ENCODE measurements at regions of chr2 and their contacts with region 1.

Region 1: DNA sequence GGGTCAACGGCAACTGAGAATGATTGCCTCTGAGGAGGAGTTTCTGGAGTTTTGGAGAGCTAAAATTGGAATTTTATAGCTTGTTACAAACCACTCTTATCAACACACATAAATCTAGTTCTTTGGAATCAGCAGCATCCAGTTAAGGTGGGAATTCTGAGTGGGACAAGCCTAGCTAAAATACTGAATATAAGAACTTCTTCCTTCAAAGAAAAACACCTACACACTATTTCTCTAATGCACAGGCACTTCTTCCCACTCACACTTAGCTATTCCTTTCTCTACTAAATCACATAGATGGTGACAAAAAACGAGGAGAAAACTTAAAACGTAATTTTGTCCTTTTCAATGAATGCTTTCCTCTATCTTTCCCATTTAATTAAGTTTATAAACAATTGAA is 43.4 kb downstream of the FAM98A start:
- DNase-seq: no peak
- H3K4me3 ChIP-seq: no peak overlapping the region
- H3K27ac ChIP-seq: peak overlapping the region; percentile 73
- H3K4me1 ChIP-seq: peaks cover 26% of the 10 kb centered on the region
- H3K27me3 ChIP-seq: no peaks in the 10 kb centered on the region
- CTCF ChIP-seq: no peak
- POLR2A ChIP-seq: no peak

Region 2: GRCh38 chr2:33497221-33497650 is 58.4 kb before region 1 on chr2:
- CTCF ChIA-PET with region 1: interaction called, 3 read pairs
- POLR2A ChIA-PET with region 1: no interaction called
- dilution Hi-C with region 1: no loop called
- intact Hi-C with region 1: loop called (anchors 2 kb)
- DNase-seq: peak; percentile 88
- H3K4me3 ChIP-seq: no peak overlapping the region
- H3K27ac ChIP-seq: no peak overlapping the region
- H3K4me1 ChIP-seq: peaks cover 29% of the 10 kb centered on the region
- H3K27me3 ChIP-seq: peaks cover 6 to 13% of the 10 kb centered on the region in 2 experiments
- CTCF ChIP-seq: no peak
- POLR2A ChIP-seq: peak; percentile 32

Measured in endothelial cell of umbilical vein (primary cell).